ENCODE measurements at regions of chr1 and their contacts with region 1.

Region 1: GRCh38 chr1:219687779-219688178 is 74.9 kb upstream of the ZC3H11B start:
- DNase-seq: no peak
- H3K4me3 ChIP-seq: no peak overlapping the region
- CTCF ChIP-seq: no peak
- POLR2A ChIP-seq: no peak

Region 2: GRCh38 chr1:219651993-219652392 is 35.8 kb before region 1 on chr1:
- intact Hi-C with region 1: loop called (anchors 1 kb)
- DNase-seq: no peak
- H3K4me3 ChIP-seq: no peak overlapping the region
- CTCF ChIP-seq: no peak
- POLR2A ChIP-seq: no peak

Measured in lower leg skin (tissue), 4 donors.